ENCODE measurements at regions of chr19 and their contacts with region 1.

Region 1: DNA sequence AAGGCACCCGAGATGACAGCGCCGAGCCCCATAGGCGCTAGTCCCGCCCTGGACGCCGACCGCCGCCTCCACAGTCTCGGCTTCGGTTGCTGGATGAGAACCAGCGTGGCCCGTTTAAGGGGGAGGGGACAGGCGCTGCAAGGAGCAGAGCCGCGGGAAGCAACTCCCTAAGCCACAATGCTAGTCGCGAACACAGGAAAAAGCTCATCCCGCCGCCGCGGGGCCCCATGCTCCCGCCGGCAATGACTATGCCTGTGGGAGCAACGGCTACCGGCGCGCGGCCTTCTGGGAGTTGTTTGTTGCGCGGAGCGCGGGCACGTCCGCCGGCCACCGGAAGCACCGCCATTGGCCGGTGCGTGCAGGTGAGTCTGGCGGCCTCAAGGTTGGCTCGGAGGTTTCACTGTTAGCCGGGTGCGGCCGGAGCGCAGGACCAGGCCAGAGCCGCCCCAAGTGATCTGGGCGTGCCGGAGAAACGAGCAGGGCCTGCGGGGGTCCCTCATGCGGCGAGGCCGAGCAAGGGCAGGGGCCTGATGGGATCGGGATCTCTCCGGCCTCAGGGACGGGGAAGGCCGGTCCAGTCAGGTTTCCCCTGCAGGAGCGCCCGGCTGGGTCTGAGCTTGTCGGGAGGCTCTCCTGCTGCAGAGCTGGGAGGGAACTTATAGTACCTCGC is at the start of gene ZNF544:
- DNase-seq: peak; percentile 78 to 84 (median 80)
- ATAC-seq: peak; percentile 96
- H3K4me3 ChIP-seq: peak within 1 kb of the TSS; percentile 56
- H3K27ac ChIP-seq: peak within 1 kb of the TSS; percentile 91
- H3K4me1 ChIP-seq: peaks cover 8 to 14% of the 10 kb centered on the region in 2 experiments; a peak in 4 of 5 replicates
- H3K27me3 ChIP-seq: no peaks in the 10 kb centered on the region; a peak in 1 of 5 replicates
- CTCF ChIP-seq: peak in 2 of 3 experiments; percentile 2 to 29; a peak in 1 of 6 replicates
- EP300 ChIP-seq: peak; percentile 58; the same call in 1 of the 2 replicates
- POLR2A ChIP-seq: peak; percentile 95
- RAD21 ChIP-seq: no peak
- polyA plus RNA-seq, gene ZNF544: 23.6 to 28.6 TPM

Region 2: GRCh38 chr19:58212336-58213074 is 16.2 kb before region 1 on chr19:
- CTCF ChIA-PET with region 1: no interaction called
- POLR2A ChIA-PET with region 1: interaction called, 11 read pairs
- in situ Hi-C with region 1: no loop called
- intact Hi-C with region 1: no loop called
- DNase-seq: no peak
- ATAC-seq: no peak; the same call in 2 of the 3 replicates
- H3K4me3 ChIP-seq: no peak overlapping the region
- H3K27ac ChIP-seq: no peak overlapping the region
- H3K4me1 ChIP-seq: peaks cover 0 to 8% of the 10 kb centered on the region in 2 experiments; a peak in 2 of 5 replicates
- H3K27me3 ChIP-seq: no peaks in the 10 kb centered on the region
- CTCF ChIP-seq: no peak
- EP300 ChIP-seq: no peak
- POLR2A ChIP-seq: no peak
- RAD21 ChIP-seq: no peak

Region 3: DNA sequence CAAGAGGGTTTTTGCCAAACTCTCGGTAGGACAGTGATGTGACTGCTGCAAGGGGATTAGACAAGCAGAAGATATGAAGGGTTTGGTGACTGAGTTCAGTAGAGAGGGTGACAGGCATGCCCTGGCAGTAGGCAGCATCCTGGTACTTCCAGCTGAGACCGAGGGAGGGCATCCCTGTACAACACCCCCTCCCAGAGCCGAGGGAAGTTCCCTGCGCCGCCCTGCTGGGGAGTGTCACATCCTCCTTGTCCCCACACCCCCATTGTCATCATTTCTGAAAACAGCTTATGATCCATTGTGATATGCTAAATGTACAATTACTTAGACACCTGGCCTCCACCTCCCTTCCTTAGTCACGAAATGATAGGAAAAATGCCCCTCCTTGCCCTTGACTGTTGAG is 14.6 kb after region 1 on chr19:
- CTCF ChIA-PET with region 1: no interaction called
- POLR2A ChIA-PET with region 1: interaction called, 10 read pairs
- in situ Hi-C with region 1: no loop called
- intact Hi-C with region 1: no loop called
- DNase-seq: no peak
- ATAC-seq: peak; percentile 26; the same call in 1 of the 3 replicates
- H3K4me3 ChIP-seq: no peak overlapping the region
- H3K27ac ChIP-seq: no peak overlapping the region
- H3K4me1 ChIP-seq: no peaks in the 10 kb centered on the region
- H3K27me3 ChIP-seq: no peaks in the 10 kb centered on the region
- CTCF ChIP-seq: 0 out of 6 replicates have a peak, but pooled peaks of 1 of the 3 experiments have one; percentile 31
- EP300 ChIP-seq: no peak
- POLR2A ChIP-seq: no peak
- RAD21 ChIP-seq: no peak

Region 4: DNA sequence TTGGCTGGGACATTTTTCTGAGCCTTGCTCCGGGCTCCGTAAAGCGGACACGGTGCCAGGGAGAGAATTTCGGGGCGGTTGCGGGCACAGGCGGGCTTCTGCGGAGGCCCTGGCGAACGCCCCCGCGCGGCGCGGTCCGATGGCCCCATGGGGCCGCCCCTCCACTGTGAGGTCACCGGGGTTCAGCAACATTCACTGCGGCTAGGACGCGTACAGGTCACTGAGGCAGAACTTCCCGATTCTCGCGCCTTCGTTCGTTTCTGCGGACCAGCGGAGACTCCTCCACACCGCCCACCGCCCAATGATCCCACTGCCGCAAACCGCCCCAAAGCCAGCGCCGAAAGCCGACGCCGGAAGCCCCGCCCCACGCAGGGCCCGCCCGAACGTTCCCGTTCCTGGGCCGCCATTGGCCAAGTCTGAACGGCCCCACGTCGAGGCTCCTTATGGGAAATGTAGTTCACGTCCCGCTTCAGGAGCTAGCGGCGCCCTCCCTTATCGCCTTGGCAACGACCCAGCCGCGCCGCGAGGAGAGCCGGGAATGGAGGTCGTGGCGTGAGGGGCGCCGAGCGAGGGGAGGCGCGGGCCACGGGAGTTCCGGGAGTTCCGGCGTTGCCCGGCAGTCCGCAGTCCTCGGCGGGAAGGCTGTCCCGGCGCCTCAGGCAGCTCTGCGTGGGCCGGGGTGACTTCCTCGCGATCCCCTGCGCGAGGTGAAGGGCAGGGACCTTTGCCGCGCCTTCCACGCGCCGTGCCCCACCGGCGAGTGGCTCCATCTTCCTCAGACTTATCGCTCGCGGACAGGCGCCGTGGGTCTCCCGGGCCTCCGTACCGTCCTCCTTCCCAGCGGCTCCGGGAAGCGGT is 179.7 kb after region 1 on chr19 and contains the start of gene ZNF584:
- CTCF ChIA-PET with region 1: no interaction called
- POLR2A ChIA-PET with region 1: interaction called, 4 read pairs
- in situ Hi-C with region 1: no loop called
- intact Hi-C with region 1: loop called (anchors 10 kb)
- DNase-seq: peak; percentile 92 to 98 (median 95)
- ATAC-seq: peak; percentile 94
- H3K4me3 ChIP-seq: peak within 1 kb of the TSS; percentile 87
- H3K27ac ChIP-seq: peak within 1 kb of the TSS; percentile 97
- H3K4me1 ChIP-seq: peaks cover 18 to 39% of the 10 kb centered on the region in 2 experiments
- H3K27me3 ChIP-seq: no peaks in the 10 kb centered on the region
- CTCF ChIP-seq: peak in 1 of 3 experiments; percentile 32; a peak in 3 of 6 replicates
- EP300 ChIP-seq: peak; percentile 26; the same call in 1 of the 2 replicates
- POLR2A ChIP-seq: peak; percentile 96
- RAD21 ChIP-seq: peak in 1 of 2 experiments; percentile 21; a peak in 2 of 4 replicates
- polyA plus RNA-seq, gene ZNF584: 5.8 to 7.1 TPM

Measured in K562 (cell line).